Psoas muscle (tissue), 8 donors: ENCODE measurements at regions of chr5 and their contacts with region 1.

Region 1: GRCh38 chr5:90184764-90185163 is 224.8 kb downstream of the CETN3 start:
- DNase-seq: no peak
- ATAC-seq: no peak
- H3K4me3 ChIP-seq: no peak overlapping the region
- H3K27ac ChIP-seq: no peak overlapping the region
- H3K4me1 ChIP-seq: no peaks in the 10 kb centered on the region
- H3K27me3 ChIP-seq: no peaks in the 10 kb centered on the region
- CTCF ChIP-seq: no peak

Region 2: DNA sequence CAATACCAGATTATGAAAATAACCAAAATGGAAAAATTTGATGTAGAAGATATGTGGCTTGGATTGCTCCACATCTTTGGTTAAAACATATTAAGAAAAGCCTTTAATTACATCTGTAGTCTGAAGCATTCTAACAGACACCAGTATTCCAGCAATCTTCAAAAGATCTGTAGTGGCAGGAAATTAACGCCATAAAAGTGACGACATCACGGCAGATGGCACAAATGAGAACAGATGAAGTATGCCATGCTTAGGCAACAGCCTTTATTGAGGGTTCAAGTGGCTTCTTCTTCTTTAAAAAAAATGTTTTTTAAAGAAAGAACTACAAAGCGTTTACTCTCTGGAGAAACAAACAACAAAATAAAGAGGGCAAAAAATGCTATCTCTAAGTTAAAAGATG is 1466.0 kb before region 1 on chr5:
- intact Hi-C with region 1: loop called in 1 of 2 experiments (anchors 10 kb)
- DNase-seq: no peak
- ATAC-seq: no peak
- H3K4me3 ChIP-seq: no peak overlapping the region
- H3K27ac ChIP-seq: no peak overlapping the region
- H3K4me1 ChIP-seq: no peaks in the 10 kb centered on the region
- H3K27me3 ChIP-seq: no peaks in the 10 kb centered on the region
- CTCF ChIP-seq: no peak

Region 3: GRCh38 chr5:90495146-90495545 is 310.4 kb after region 1 on chr5:
- intact Hi-C with region 1: no loop called
- DNase-seq: no peak
- ATAC-seq: no peak
- H3K4me3 ChIP-seq: no peak overlapping the region
- H3K27ac ChIP-seq: no peak overlapping the region
- H3K4me1 ChIP-seq: no peaks in the 10 kb centered on the region
- H3K27me3 ChIP-seq: no peaks in the 10 kb centered on the region
- CTCF ChIP-seq: no peak